Dendritic cell treated with granulocyte-macrophage colony-stimulating factor and Interleukin-4, amounts not matched to agents 40 ng/mL and 50 ng/mL, for 4 days (primary cell): ENCODE measurements at regions of chr13 and their contacts with region 1.

Region 1: GRCh38 chr13:36736119-36736726 is 62.4 kb downstream of the SERTM1 start:
- H3K4me3 Mint-ChIP-seq: no peak overlapping the region
- H3K27ac Mint-ChIP-seq: no peak overlapping the region
- H3K4me1 Mint-ChIP-seq: no peaks in the 10 kb centered on the region
- H3K27me3 Mint-ChIP-seq: no peaks in the 10 kb centered on the region

Region 2: GRCh38 chr13:36282818-36283445 is 453.3 kb before region 1 on chr13:
- intact Hi-C with region 1: loop called (anchors 1 kb)
- H3K4me3 Mint-ChIP-seq: no peak overlapping the region
- H3K27ac Mint-ChIP-seq: no peak overlapping the region
- H3K4me1 Mint-ChIP-seq: no peaks in the 10 kb centered on the region
- H3K27me3 Mint-ChIP-seq: no peaks in the 10 kb centered on the region